WTC11 (cell line): ENCODE measurements at regions of chr14 and their contacts with region 1.

Region 1: GRCh38 chr14:59688224-59689170 is 111.9 kb upstream of the CCDC175 start:
- DNase-seq: peak; percentile 76
- ATAC-seq: peak; percentile 100
- H3K4me3 Mint-ChIP-seq: no peak overlapping the region
- H3K27ac Mint-ChIP-seq: no peak overlapping the region
- H3K4me1 Mint-ChIP-seq: peaks cover 3% of the 10 kb centered on the region
- H3K27me3 Mint-ChIP-seq: no peaks in the 10 kb centered on the region
- CTCF ChIP-seq: peak; percentile 68

Region 2: DNA sequence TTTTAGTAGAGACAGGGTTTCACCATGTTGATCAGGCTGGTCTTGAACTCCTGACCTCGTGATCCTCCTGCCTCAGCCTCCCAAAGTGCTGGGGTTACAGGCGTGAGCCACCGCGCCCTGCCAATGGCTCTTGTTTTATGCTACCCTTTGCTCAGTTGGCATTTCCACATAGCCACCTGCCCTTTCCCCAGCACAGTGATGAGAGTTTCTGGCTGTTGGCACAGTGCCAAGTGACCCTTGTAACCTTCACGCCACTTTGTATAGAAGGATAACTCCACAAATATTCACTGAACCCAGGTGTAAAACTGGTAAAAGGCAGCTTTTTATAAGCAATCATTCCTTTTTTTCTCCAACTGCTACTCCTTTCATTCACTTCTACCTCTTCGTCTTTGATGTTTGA is 93.4 kb before region 1 on chr14:
- CTCF ChIA-PET with region 1: no interaction called
- POLR2A ChIA-PET with region 1: no interaction called
- DNase-seq: no peak
- ATAC-seq: no peak
- H3K4me3 Mint-ChIP-seq: no peak overlapping the region
- H3K27ac Mint-ChIP-seq: no peak overlapping the region
- H3K4me1 Mint-ChIP-seq: no peaks in the 10 kb centered on the region
- H3K27me3 Mint-ChIP-seq: peaks cover 2% of the 10 kb centered on the region; the same call in 1 of the 2 replicates
- CTCF ChIP-seq: no peak

Region 3: DNA sequence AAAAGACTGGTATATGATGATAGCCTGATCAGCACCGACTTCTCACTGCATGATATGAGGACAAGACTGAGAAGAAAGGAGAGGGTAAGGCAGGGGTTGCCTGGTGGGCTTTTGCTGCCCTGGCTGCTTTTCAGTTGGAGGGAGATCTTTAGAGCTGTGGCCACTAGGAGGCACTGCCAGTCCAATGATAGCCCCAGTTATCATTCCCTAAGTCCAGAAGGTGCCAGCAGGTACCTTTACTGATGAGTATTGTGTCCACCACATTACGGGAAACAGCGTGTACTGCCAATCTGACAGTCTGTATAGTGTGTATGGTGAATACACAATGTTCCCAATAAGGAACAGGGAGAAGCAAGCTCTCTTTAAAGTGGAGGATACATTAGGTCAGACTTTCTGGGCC is 56.1 kb before region 1 on chr14:
- CTCF ChIA-PET with region 1: interaction called, 19 read pairs
- POLR2A ChIA-PET with region 1: no interaction called
- DNase-seq: peak; percentile 64
- ATAC-seq: peak; percentile 65
- H3K4me3 Mint-ChIP-seq: no peak overlapping the region
- H3K27ac Mint-ChIP-seq: no peak overlapping the region
- H3K4me1 Mint-ChIP-seq: peaks cover 15% of the 10 kb centered on the region
- H3K27me3 Mint-ChIP-seq: peaks cover 27% of the 10 kb centered on the region
- CTCF ChIP-seq: peak; percentile 53; the same call in 1 of the 2 replicates